GM13976 (cell line): ENCODE measurements at regions of chr4 and their contacts with region 1.

Region 1: DNA sequence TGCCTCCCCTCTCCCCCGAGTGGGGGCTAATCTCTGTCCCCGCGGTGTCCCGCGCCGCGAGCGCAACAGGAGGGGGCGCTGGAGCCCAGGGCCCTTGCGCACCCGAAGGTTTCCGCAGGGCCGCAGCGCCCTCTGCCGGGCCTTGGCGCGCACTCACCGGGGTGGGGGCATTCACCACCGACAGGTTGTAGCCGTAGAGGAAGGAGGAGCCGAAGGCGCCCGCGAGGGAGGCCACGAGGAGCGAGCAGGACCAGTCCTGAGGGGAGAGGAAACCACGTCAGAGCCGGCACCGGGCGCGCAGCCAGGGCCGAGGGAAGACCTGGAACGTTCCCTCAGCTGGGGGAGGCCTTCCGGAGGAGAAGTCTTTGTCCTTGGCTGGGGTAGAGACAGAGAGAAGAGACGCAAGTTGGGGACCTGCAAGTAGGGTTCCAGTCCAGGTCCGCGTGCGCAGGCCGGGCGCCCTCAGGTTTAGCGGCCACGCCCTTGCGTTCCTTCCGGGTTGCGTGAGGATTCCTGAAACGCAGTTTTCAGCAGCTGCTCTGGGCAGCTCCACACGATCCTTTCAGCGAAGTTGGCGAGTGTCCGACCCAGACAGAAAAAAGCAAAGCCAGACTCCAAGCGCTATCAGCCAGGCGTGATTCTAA is 2.4 kb downstream of the SLC2A9 start:
- DNase-seq: peak; percentile 97
- CTCF ChIP-seq: peak; percentile 99

Region 2: DNA sequence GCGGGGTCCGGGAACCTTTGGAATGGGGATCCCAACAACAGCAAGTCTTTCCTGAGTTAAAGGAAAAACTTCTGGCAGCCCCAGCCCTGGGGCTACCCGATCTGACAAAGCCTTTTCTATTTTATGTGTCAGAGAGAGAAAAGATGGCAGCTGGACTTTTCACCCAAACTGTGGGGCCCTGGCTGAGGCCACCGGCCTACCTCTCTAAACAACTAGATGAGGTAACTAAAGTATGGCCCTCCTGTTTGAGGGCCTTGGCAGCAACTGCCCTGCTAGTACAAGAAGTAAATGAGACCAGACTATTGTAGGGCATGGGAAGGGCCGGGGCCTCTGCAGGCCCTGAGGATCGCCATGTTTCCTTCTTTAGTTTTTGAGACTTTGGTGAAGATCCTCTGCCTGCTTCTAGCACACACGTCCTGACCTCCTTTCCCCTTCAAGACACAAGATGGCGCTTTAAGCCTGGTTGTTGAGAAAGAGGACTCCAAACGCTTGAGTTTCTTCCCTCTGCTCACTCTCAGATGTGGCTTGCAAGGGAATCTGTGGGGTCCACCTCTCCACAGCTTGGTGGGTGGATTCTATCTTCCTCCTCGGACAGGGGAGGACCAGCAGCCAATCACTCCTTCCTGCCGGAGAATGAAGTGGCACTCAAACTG is 256.0 kb before region 1 on chr4:
- in situ Hi-C with region 1: loop called (anchors 5 kb)
- DNase-seq: peak; percentile 74
- CTCF ChIP-seq: peak; percentile 70

Region 3: DNA sequence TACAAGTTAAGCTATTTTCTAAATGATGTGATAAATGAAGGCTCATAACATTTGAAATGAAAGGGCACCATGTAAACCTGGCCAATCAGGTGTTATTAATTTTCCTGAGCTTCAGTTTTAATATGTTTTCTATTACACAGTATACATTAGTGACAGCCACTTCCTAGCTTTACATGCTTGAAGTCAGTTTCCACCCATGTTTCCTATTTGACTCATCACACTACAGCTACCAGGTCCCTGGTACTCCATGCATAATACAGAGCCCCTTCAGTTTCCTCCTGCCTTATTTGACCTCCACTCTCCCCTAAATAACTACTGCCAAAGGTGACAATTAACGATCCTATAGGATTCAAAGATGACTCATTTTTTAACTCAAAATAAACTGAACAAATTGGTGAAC is 420.0 kb after region 1 on chr4:
- in situ Hi-C with region 1: no loop called
- DNase-seq: no peak
- CTCF ChIP-seq: no peak